MCF 10A (cell line): ENCODE measurements at regions of chr9 and their contacts with region 1.

Region 1: DNA sequence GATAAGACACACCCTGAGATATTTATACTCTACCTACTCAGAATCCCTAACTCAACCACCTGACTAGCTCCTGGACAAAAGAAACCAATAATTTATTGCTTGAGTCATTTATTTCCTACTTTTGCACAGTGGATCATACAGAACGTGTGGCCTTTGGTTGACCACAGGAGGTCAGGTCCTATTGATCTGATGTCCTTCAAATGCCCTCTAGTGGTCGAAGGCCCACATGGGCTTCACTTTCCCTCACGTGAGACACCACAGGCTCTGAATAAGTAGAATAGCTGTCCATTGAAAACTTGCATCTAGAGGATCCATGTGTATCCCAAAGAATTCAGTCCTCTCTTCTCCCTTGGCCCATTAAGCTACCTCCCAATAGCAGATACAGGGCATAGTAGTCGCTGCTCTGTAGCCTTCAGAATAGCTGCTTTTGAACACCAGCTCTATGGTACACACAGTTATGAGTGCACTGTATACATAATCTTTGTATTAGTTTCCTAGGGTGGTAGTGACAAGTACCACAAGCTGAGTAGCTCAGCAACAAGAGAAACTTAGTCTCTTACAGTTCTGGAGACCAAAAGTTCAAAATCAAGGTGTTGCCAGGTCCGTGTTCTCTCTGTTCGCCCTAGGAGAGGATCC is 177.6 kb upstream of the SMARCA2 start:
- DNase-seq: peak; percentile 62
- H3K4me3 Mint-ChIP-seq: no peak overlapping the region
- H3K27ac Mint-ChIP-seq: no peak overlapping the region
- H3K4me1 Mint-ChIP-seq: peaks cover 5% of the 10 kb centered on the region
- H3K27me3 Mint-ChIP-seq: peaks cover 19% of the 10 kb centered on the region
- CTCF ChIP-seq: peak; percentile 46

Region 2: DNA sequence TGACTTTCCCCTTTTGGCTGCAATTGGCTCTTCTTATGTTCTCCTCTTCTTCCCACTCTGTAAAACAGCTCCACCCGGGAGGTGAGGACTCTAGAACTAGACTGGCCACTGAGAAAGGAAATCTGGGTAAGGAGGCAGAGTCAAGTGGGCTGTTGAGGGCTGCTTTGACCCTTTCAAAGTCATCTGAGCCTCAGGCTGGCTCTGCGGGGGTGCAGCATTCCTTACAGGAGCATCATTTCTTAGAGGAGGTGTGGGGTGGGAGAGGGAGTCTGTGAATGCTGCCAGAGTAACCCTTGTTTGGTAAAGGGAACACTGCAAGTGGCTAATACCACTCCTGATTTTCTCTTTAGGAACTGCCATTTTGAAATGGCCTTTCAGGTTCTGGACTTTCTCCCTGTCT is 200.2 kb before region 1 on chr9:
- CTCF ChIA-PET with region 1: no interaction called
- POLR2A ChIA-PET with region 1: no interaction called
- intact Hi-C with region 1: loop called (anchors 5 kb)
- DNase-seq: no peak
- H3K4me3 Mint-ChIP-seq: no peak overlapping the region
- H3K27ac Mint-ChIP-seq: no peak overlapping the region
- H3K4me1 Mint-ChIP-seq: no peaks in the 10 kb centered on the region
- H3K27me3 Mint-ChIP-seq: no peaks in the 10 kb centered on the region
- CTCF ChIP-seq: no peak

Region 3: GRCh38 chr9:1875921-1876448 is 38.4 kb after region 1 on chr9:
- CTCF ChIA-PET with region 1: no interaction called
- POLR2A ChIA-PET with region 1: no interaction called
- intact Hi-C with region 1: no loop called
- DNase-seq: no peak
- H3K4me3 Mint-ChIP-seq: no peak overlapping the region
- H3K27ac Mint-ChIP-seq: no peak overlapping the region
- H3K4me1 Mint-ChIP-seq: no peaks in the 10 kb centered on the region
- H3K27me3 Mint-ChIP-seq: peaks cover 2% of the 10 kb centered on the region
- CTCF ChIP-seq: no peak